Posterior vena cava (tissue), 2 donors: ENCODE measurements at regions of chr11 and their contacts with region 1.

Region 1: GRCh38 chr11:44110231-44110679 is 14.8 kb downstream of the EXT2 start:
- DNase-seq: no peak

Region 2: GRCh38 chr11:44178381-44178780 is 68.1 kb after region 1 on chr11:
- intact Hi-C with region 1: loop called in 1 of 2 experiments (anchors 10 kb)
- DNase-seq: no peak